ENCODE measurements at regions of chr6 and their contacts with region 1.

Region 1: DNA sequence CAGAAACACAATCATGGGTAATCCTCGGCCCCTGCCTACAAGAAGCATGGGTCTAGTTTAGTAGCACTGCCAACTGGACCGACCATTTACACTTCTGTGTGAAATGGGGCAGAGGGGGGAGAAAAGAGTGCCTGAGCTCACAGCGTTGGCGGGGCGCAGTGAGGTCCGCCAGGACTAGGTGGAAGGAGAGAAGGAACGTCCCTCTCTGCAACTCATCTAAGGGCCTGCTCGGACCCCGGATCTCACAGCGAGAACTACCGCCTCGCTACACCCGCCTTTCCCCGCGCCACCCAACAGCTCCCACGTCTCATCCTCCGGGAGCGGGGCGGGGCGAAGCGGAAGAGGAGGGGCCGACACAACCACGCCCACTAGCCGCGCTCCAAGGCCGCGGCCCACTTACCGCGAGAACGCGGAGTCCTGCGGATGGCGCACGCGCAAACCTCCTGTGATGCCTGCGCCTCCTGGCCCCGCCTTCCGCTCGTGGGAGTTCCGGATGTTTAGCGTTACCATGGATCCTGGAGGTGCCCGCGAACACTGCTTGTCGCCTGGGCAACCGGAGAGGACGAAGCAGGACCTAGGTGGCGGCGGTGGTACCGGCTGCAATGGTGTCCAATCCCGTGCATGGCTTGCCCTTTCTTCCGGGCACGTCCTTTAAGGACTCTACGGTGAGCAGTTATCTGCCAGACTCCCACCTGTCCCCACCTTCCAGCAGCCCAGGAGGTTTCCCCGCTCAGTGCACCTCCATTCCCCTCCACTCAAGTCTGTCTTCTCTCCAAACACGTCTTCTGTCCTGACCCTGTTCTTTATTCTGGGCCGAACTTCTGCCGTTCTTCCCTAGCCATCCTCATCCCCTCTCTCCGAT is at the start of gene EFHC1:
- DNase-seq: peak; percentile 97 to 100
- ATAC-seq: peak; percentile 91 to 98 (median 93)
- H3K4me3 ChIP-seq: peak within 1 kb of the TSS; percentile 87
- H3K4me3 Mint-ChIP-seq: no peak within 1 kb of the TSS
- H3K27ac ChIP-seq: peak within 1 kb of the TSS; percentile 71
- H3K27ac Mint-ChIP-seq: no peak within 1 kb of the TSS
- H3K4me1 ChIP-seq: peaks cover 15% of the 10 kb centered on the region
- H3K4me1 Mint-ChIP-seq: no peaks in the 10 kb centered on the region
- H3K27me3 ChIP-seq: no peaks in the 10 kb centered on the region
- H3K27me3 Mint-ChIP-seq: peaks cover 0 to 7% of the 10 kb centered on the region in 2 donors
- CTCF ChIP-seq: no peak
- total RNA-seq, gene EFHC1: 10.7 to 20.9 (median 13.7) TPM

Region 2: GRCh38 chr6:52361945-52362442 is 58.0 kb before region 1 on chr6 and contains the start of gene PAQR8:
- intact Hi-C with region 1: loop called (anchors 1 kb)
- DNase-seq: peak; percentile 75 to 92
- ATAC-seq: peak; percentile 83 to 93 (median 88)
- H3K4me3 ChIP-seq: peak within 1 kb of the TSS; percentile 98
- H3K4me3 Mint-ChIP-seq: peak within 1 kb of the TSS; percentile 96
- H3K27ac ChIP-seq: peak within 1 kb of the TSS; percentile 94
- H3K27ac Mint-ChIP-seq: peak within 1 kb of the TSS; percentile 92
- H3K4me1 ChIP-seq: peaks cover 15% of the 10 kb centered on the region
- H3K4me1 Mint-ChIP-seq: peaks cover 26 to 31% of the 10 kb centered on the region in 2 donors
- H3K27me3 ChIP-seq: no peaks in the 10 kb centered on the region
- H3K27me3 Mint-ChIP-seq: no peaks in the 10 kb centered on the region
- CTCF ChIP-seq: no peak
- total RNA-seq, gene PAQR8: 2.4 to 5.0 (median 4.6) TPM

Region 3: DNA sequence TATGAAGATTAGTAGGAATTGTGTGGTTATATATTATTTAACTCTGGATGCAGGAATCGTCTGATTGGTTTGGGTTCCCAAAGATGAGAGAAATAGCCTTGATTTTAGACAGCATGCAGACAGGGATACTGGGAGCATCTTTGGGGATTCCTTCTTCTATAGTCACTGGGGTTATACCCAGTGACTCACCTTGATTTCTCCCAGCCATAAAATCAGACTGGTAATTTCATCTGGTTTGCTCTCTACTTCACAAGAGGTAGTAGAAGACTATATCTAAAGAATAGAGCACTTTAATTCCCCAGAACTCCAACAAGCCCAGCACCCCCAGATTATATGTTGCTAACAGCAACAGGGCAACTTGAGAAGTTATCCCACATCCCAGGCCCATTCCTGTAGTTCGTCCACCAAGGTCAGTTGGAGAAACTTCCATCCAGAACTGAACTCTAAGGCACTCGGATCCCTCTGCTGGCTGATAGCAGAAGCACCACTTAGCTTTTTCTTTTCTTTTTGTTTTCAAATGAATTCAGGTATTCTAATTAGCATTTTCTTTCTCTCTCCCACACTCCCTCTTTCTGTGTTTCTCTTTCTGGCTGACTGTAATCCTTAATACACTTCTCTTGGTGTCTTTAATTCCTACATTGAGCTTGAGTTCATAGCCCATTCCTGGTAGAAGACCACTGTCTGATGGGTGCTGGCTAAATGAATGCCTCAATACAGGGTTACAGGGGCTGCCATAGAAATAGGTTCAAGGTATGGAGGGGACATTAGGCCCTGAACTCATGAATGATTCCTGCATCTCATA is 20.3 kb before region 1 on chr6:
- intact Hi-C with region 1: no loop called
- DNase-seq: peak in 1 of 2 donors; percentile 77
- ATAC-seq: peak in 2 of 3 donors; percentile 65 to 75
- H3K4me3 ChIP-seq: no peak overlapping the region
- H3K4me3 Mint-ChIP-seq: peak overlapping the region; percentile 61
- H3K27ac ChIP-seq: no peak overlapping the region
- H3K27ac Mint-ChIP-seq: peak overlapping the region; percentile 21 to 84
- H3K4me1 ChIP-seq: peaks cover 25% of the 10 kb centered on the region
- H3K4me1 Mint-ChIP-seq: peaks cover 38 to 43% of the 10 kb centered on the region in 2 donors
- H3K27me3 ChIP-seq: no peaks in the 10 kb centered on the region
- H3K27me3 Mint-ChIP-seq: no peaks in the 10 kb centered on the region
- CTCF ChIP-seq: peak; percentile 80

Region 4: GRCh38 chr6:52577022-52577777 is 157.2 kb after region 1 on chr6 and contains the start of gene TRAM2:
- intact Hi-C with region 1: loop called (anchors 1 kb)
- DNase-seq: peak; percentile 74 to 89
- ATAC-seq: peak; percentile 70 to 87 (median 77)
- H3K4me3 ChIP-seq: peak within 1 kb of the TSS; percentile 65
- H3K4me3 Mint-ChIP-seq: peak within 1 kb of the TSS; percentile 89
- H3K27ac ChIP-seq: peak within 1 kb of the TSS; percentile 65
- H3K27ac Mint-ChIP-seq: peak within 1 kb of the TSS; percentile 87 to 91
- H3K4me1 ChIP-seq: peaks cover 40% of the 10 kb centered on the region
- H3K4me1 Mint-ChIP-seq: peaks cover 43 to 45% of the 10 kb centered on the region in 2 donors
- H3K27me3 ChIP-seq: no peaks in the 10 kb centered on the region
- H3K27me3 Mint-ChIP-seq: no peaks in the 10 kb centered on the region
- CTCF ChIP-seq: no peak
- total RNA-seq, gene TRAM2: 16.2 to 20.0 (median 19.2) TPM

Region 5: GRCh38 chr6:52598123-52598823 is 178.2 kb after region 1 on chr6:
- intact Hi-C with region 1: loop called (anchors 2 kb)
- DNase-seq: peak in 1 of 2 donors; percentile 50
- ATAC-seq: peak; percentile 32 to 73 (median 72)
- H3K4me3 ChIP-seq: no peak overlapping the region
- H3K4me3 Mint-ChIP-seq: no peak overlapping the region
- H3K27ac ChIP-seq: no peak overlapping the region
- H3K27ac Mint-ChIP-seq: no peak overlapping the region
- H3K4me1 ChIP-seq: peaks cover 8% of the 10 kb centered on the region
- H3K4me1 Mint-ChIP-seq: peaks cover 6 to 13% of the 10 kb centered on the region in 2 donors
- H3K27me3 ChIP-seq: no peaks in the 10 kb centered on the region
- H3K27me3 Mint-ChIP-seq: peaks cover 5 to 23% of the 10 kb centered on the region in 2 donors
- CTCF ChIP-seq: peak; percentile 50

Measured in natural killer cell (primary cell).